Body of pancreas (tissue), 4 donors: ENCODE measurements at regions of chr14 and their contacts with region 1.

Region 1: DNA sequence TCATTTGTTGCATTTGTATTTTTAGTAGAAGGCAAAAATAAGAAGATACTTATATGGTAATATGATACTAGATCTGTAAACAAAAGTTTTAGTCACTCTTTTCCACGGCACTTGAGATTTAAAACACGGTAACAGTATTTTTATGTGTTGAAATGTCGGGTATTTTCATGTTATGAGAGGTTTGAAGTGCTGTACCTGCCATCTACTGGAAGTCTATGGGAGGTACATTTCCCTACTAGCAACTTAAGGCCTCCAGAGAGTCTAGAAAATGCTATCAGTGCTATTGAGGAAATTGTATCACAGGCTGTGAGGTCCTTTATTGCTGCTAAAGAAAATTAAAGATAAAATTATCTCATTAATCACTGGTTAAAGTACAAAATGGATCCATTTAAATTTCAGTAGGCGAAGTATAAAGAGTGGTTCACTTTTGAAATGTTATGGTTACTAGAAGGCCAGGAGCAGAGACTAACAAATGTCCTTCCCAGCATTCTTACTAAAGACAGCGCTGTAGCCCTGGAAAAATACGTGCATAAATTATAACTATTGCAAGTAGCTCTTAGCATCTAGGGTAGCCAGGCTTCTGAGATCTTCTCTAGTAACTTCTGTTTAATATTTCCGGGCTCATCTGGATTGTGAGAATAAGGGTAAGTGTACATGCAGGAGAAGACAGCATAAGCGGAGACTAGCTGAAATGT is 77.6 kb upstream of the PRKD1 start:
- DNase-seq: peak in 1 of 4 donors; percentile 46
- ATAC-seq: peak; percentile 89
- H3K4me3 ChIP-seq: no peak overlapping the region
- H3K27ac ChIP-seq: no peak overlapping the region
- H3K4me1 ChIP-seq: no peaks in the 10 kb centered on the region
- H3K27me3 ChIP-seq: no peaks in the 10 kb centered on the region
- CTCF ChIP-seq: peak; percentile 55 to 86 (median 80)
- POLR2A ChIP-seq: no peak

Region 2: GRCh38 chr14:29548948-29549370 is 456.3 kb before region 1 on chr14:
- intact Hi-C with region 1: loop called (anchors 5 kb)
- DNase-seq: peak in 1 of 4 donors; percentile 6
- ATAC-seq: peak; percentile 82
- H3K4me3 ChIP-seq: no peak overlapping the region
- H3K27ac ChIP-seq: no peak overlapping the region
- H3K4me1 ChIP-seq: no peaks in the 10 kb centered on the region
- H3K27me3 ChIP-seq: no peaks in the 10 kb centered on the region
- CTCF ChIP-seq: peak; percentile 48 to 66 (median 55)
- POLR2A ChIP-seq: no peak

Region 3: DNA sequence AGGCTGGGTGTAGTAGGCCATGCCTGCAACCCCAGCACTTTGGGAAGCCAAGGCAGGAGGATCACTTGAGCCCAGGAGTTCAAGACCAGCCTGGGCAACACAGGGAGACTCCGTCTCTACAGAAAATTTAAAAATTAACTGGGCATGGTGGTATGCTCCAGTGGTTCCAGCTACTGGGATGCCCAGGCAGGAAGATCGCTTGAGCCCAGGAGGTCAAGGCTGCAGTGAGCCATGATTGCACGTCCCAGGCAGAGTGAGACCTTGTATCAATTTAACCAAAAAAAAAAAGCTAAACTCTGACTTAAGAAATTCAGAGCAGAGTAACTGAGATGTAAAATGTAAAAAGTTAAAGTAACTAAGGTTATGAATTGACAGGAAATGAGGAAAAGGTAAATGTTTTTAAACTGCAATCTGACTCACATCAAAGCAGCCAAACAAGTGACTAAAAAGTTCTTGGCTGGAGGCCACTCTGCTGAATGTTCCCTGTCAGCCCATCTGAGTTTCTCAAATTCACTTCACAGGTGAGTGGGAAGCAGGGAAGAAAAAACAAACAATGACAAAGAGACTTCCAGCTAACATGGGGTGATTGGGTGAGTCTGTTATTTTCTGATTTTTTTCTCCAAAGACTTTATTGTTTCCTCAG is 98.9 kb before region 1 on chr14:
- intact Hi-C with region 1: no loop called
- DNase-seq: peak; percentile 41 to 65 (median 56)
- ATAC-seq: peak; percentile 81
- H3K4me3 ChIP-seq: no peak overlapping the region
- H3K27ac ChIP-seq: peak overlapping the region in 2 of 4 donors; percentile 66 to 77
- H3K4me1 ChIP-seq: peaks cover 25% of the 10 kb centered on the region
- H3K27me3 ChIP-seq: no peaks in the 10 kb centered on the region
- CTCF ChIP-seq: no peak
- POLR2A ChIP-seq: no peak